Heart right ventricle (tissue), 16 donors: ENCODE measurements at regions of chr10 and their contacts with region 1.

Region 1: DNA sequence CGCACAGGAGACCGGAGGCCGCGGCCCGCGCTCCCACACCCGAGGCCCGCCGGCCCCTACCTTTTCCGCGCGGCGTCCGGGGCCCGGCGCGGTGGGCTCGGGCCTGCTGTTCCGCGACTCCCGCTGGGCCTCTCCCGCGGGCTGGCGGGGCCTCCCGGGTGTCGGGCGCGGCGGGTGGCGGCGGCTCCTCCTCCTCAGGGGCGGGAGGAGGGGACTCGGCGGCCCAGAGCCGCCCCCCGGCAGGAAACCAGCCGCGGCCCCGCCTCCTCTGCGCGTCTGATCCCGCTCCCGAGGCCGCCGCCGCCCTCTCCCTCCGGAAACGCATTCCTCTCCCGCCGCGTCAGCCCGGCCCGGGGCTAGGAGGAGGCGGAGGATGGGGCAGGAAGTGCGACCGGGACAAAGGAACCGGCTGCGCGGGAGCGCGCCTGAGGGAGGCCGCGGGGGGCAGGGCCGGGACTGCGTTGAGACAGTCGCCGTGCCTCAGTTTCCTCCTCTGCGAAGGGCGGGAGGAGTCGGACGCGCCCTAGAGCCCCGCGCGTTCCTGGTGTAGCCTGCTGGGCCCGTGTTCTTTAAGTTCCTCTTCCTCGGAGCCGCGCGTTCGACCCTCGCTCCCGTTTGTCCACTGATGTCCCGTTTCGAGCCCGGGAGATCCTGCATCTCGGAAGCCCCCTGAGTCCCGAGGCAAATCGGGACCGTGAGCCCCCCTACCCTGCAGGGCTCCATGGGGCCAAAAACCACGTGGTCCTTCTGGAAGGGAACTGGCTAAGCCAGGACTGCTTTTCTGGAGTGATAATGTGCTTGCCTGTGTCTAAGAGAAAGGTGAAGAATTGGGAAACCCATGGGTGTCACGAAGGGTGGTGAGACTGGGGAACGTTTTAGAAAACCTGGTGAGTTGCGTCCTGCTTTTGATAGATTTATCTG is at the start of gene ITGB1:
- DNase-seq: peak; percentile 97 to 98
- ATAC-seq: peak; percentile 95 to 98 (median 96)
- H3K4me3 ChIP-seq: peak within 1 kb of the TSS; percentile 70 to 99 (median 88)
- H3K27ac ChIP-seq: peak within 1 kb of the TSS; percentile 93 to 100 (median 99)
- H3K4me1 ChIP-seq: peaks cover 0 to 83% (median 70%) of the 10 kb centered on the region in 9 donors
- H3K27me3 ChIP-seq: no peaks in the 10 kb centered on the region
- CTCF ChIP-seq: no peak
- total RNA-seq, gene ITGB1: 503 to 713 (median 595) TPM

Region 2: GRCh38 chr10:32938554-32939061 is 19.7 kb before region 1 on chr10:
- intact Hi-C with region 1: loop called in 1 of 10 experiments (anchors 2 kb)
- DNase-seq: peak; percentile 28 to 44
- ATAC-seq: peak; percentile 42 to 70 (median 61)
- H3K4me3 ChIP-seq: peak overlapping the region in 7 of 10 donors; percentile 4 to 31 (median 22)
- H3K27ac ChIP-seq: peak overlapping the region; percentile 11 to 86 (median 69)
- H3K4me1 ChIP-seq: peaks cover 25 to 95% (median 77%) of the 10 kb centered on the region in 9 donors
- H3K27me3 ChIP-seq: no peaks in the 10 kb centered on the region
- CTCF ChIP-seq: no peak

Region 3: DNA sequence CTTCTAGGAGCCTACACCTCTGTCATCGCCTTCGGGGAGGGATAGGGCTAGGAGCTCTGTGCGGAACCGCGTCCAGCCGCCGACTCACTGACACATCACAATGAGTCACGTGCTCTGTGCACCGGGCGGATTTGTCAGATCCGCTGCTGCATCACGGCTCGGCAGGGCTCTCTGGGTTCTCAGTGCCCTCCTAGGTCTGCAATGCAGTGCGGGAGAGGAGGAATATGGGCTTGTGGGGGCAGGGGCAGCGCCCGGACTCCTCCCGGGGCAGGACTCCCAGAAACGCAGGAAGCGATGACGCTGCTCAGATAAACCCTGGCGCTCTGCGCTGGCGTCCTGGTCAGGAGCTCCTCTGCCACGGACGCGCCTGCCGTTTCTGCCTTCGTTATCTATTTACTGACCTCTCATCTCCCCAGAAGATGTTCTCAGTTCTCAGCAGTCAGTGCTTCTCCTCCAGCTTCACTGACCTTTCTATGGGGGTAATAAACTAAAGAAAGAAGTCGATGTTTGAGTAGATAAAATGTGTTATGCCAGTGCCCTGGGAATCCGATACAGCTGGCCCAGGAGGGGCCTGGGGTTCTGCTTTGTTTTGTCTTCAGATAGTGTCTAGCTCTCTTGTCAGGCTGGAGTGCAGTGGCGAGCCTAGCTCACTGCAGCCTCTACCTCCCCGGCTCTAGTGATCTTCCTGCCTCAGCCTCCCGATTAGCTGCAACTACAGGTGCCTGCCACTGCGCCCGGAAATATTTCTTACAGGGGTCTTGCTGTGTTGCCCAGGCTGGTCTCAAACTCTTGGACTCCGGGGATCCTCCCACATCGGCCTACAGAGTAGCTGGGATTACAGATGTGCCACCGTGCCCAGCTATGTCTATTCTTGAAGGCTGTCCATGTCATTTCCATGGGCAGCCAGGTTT is 22.5 kb after region 1 on chr10:
- intact Hi-C with region 1: loop called in 4 of 10 experiments (anchors 1 to 2 kb)
- DNase-seq: peak; percentile 87 to 88
- ATAC-seq: peak; percentile 91 to 99 (median 94)
- H3K4me3 ChIP-seq: peak overlapping the region; percentile 28 to 64 (median 58)
- H3K27ac ChIP-seq: peak overlapping the region; percentile 67 to 98 (median 94)
- H3K4me1 ChIP-seq: peaks cover 0 to 59% (median 32%) of the 10 kb centered on the region in 9 donors
- H3K27me3 ChIP-seq: no peaks in the 10 kb centered on the region
- CTCF ChIP-seq: no peak

Region 4: GRCh38 chr10:33001908-33002492 is 43.7 kb after region 1 on chr10:
- intact Hi-C with region 1: loop called in 5 of 10 experiments (anchors 2 to 5 kb)
- DNase-seq: no peak
- ATAC-seq: no peak
- H3K4me3 ChIP-seq: no peak overlapping the region
- H3K27ac ChIP-seq: no peak overlapping the region
- H3K4me1 ChIP-seq: peaks cover 4 to 28% (median 16%) of the 10 kb centered on the region in 9 donors
- H3K27me3 ChIP-seq: no peaks in the 10 kb centered on the region
- CTCF ChIP-seq: no peak

Region 5: GRCh38 chr10:33421789-33422462 is 463.6 kb after region 1 on chr10:
- intact Hi-C with region 1: no loop called
- DNase-seq: no peak
- ATAC-seq: peak in 7 of 8 donors; percentile 60 to 90 (median 79)
- H3K4me3 ChIP-seq: no peak overlapping the region
- H3K27ac ChIP-seq: no peak overlapping the region
- H3K4me1 ChIP-seq: peaks cover 0 to 24% (median 0%) of the 10 kb centered on the region in 9 donors
- H3K27me3 ChIP-seq: no peaks in the 10 kb centered on the region
- CTCF ChIP-seq: no peak